ENCODE measurements at regions of chr2 and their contacts with region 1.

Region 1: DNA sequence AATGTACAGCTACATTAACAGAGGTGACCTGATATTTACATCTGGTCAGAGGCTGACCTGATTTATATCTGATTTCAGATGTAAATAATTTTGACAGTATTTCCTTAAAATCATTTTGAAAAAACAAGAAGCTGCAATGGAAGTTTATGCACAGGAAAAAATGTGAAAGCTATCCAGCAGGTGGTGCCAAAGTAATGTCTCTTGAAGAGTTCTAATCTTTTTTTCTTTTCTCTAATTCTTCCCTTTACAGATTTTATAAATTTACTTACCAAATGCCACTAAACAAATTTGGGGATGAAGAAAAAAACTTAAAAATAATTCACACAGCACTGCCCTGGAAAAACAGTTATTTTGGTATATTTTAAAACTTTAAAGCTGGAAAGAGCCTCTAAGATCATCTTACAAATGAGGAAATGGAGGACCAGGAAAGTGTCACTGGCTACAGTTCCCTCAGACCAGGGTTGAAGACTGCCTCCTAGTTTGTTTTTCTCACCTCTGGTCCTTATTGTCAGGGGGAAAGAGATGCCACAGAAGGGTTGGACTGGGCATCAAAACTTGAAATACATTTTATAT is 16.4 kb upstream of the FBLN7 start:
- DNase-seq: peak; percentile 62
- ATAC-seq: no peak
- H3K4me3 Mint-ChIP-seq: no peak overlapping the region
- H3K27ac Mint-ChIP-seq: no peak overlapping the region
- H3K4me1 Mint-ChIP-seq: peaks cover 12% of the 10 kb centered on the region
- H3K27me3 Mint-ChIP-seq: no peaks in the 10 kb centered on the region

Region 2: GRCh38 chr2:112173646-112174319 is 52.0 kb after region 1 on chr2:
- CTCF ChIA-PET with region 1: interaction called, 3 read pairs
- POLR2A ChIA-PET with region 1: no interaction called
- intact Hi-C with region 1: loop called in 1 of 2 experiments (anchors 5 kb)
- DNase-seq: no peak
- ATAC-seq: peak; percentile 65
- H3K4me3 Mint-ChIP-seq: no peak overlapping the region
- H3K27ac Mint-ChIP-seq: peak overlapping the region; percentile 64
- H3K4me1 Mint-ChIP-seq: peaks cover 29% of the 10 kb centered on the region
- H3K27me3 Mint-ChIP-seq: no peaks in the 10 kb centered on the region

Region 3: GRCh38 chr2:112254466-112255239 is 132.9 kb after region 1 on chr2 and contains the start of gene ZC3H8:
- CTCF ChIA-PET with region 1: interaction called, 29 read pairs
- POLR2A ChIA-PET with region 1: no interaction called
- intact Hi-C with region 1: loop called (anchors 2 to 5 kb)
- DNase-seq: peak; percentile 98
- ATAC-seq: peak; percentile 92
- H3K4me3 Mint-ChIP-seq: no peak within 1 kb of the TSS
- H3K27ac Mint-ChIP-seq: peak within 1 kb of the TSS; percentile 88
- H3K4me1 Mint-ChIP-seq: peaks cover 19% of the 10 kb centered on the region
- H3K27me3 Mint-ChIP-seq: no peaks in the 10 kb centered on the region
- total RNA-seq, gene ZC3H8: 21.6 to 27.1 TPM

Region 4: DNA sequence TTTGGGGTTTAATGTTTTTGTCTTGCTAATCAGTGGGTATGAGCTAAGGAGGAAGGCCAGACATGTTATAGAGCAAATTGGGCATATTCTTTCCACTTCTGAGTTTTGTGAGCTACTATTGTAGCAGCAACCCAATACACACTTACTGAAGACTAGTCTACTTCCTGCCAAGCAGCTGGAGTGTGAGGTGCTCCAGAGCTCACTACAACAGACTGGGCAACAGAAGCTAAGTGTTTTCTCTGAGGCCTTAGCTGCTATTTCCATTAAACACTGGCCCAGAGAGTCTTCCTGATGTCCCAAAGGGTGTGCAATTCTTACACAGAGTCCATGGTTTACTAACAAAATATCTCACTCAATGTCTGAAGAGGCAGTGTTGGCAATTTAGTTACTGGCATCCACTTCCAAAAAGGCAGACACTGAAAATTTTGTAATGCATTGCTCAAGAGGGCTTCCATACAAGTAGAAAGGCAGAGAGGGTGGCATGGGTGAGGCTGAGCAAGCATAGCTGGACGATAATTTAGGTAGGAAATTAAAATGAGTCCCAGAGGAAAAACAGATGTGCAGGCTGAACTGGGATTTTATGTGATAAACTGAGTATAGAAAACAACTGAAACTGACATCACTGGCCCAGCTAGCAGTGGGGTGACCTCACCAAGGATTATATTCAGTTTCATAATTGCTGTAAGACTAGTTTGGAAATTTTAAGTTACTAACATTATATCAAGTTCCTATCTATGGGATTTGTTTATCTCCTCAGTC is 222.2 kb after region 1 on chr2:
- CTCF ChIA-PET with region 1: no interaction called
- POLR2A ChIA-PET with region 1: no interaction called
- intact Hi-C with region 1: loop called in 1 of 2 experiments (anchors 5 kb)
- DNase-seq: peak; percentile 13
- ATAC-seq: peak; percentile 74
- H3K4me3 Mint-ChIP-seq: no peak overlapping the region
- H3K27ac Mint-ChIP-seq: no peak overlapping the region
- H3K4me1 Mint-ChIP-seq: peaks cover 6% of the 10 kb centered on the region
- H3K27me3 Mint-ChIP-seq: no peaks in the 10 kb centered on the region

Measured in activated CD4-positive, alpha-beta T cell treated with anti-CD3 and anti-CD28 coated beads for 36 hours (primary cell).